ENCODE measurements at regions of chr5 and their contacts with region 1.

Region 1: GRCh38 chr5:82635561-82636288 is 357.6 kb upstream of the RPS23 start:
- DNase-seq: peak; percentile 98
- ATAC-seq: peak; percentile 99
- H3K4me3 ChIP-seq: no peak overlapping the region; a peak in 1 of 6 replicates
- H3K27ac ChIP-seq: peak overlapping the region; percentile 56
- H3K4me1 ChIP-seq: peaks cover 31% of the 10 kb centered on the region
- H3K27me3 ChIP-seq: no peaks in the 10 kb centered on the region
- CTCF ChIP-seq: no peak
- EP300 ChIP-seq: peak in 1 of 2 experiments; percentile 97; a peak in 2 of 4 replicates
- POLR2A ChIP-seq: no peak
- RAD21 ChIP-seq: peak; percentile 15; the same call in 1 of the 2 replicates

Region 2: GRCh38 chr5:82356808-82357671 is 278.7 kb before region 1 on chr5:
- CTCF ChIA-PET with region 1: no interaction called
- POLR2A ChIA-PET with region 1: interaction called, 4 read pairs
- in situ Hi-C with region 1: loop called (anchors 25 kb)
- intact Hi-C with region 1: loop called (anchors 1 kb)
- DNase-seq: peak; percentile 93
- ATAC-seq: peak; percentile 93
- H3K4me3 ChIP-seq: peak overlapping the region in 1 of 3 experiments; percentile 57; a peak in 2 of 6 replicates
- H3K27ac ChIP-seq: peak overlapping the region; percentile 60
- H3K4me1 ChIP-seq: peaks cover 64% of the 10 kb centered on the region
- H3K27me3 ChIP-seq: no peaks in the 10 kb centered on the region
- CTCF ChIP-seq: no peak
- EP300 ChIP-seq: peak in 1 of 2 experiments; percentile 80; a peak in 2 of 4 replicates
- POLR2A ChIP-seq: peak in 1 of 2 experiments; percentile 31; a peak in 1 of 4 replicates
- RAD21 ChIP-seq: no peak

Region 3: GRCh38 chr5:82622711-82623514 is 12.8 kb before region 1 on chr5:
- CTCF ChIA-PET with region 1: no interaction called
- POLR2A ChIA-PET with region 1: interaction called, 28 read pairs
- in situ Hi-C with region 1: no loop called
- intact Hi-C with region 1: no loop called
- DNase-seq: peak; percentile 87
- ATAC-seq: peak; percentile 99
- H3K4me3 ChIP-seq: peak overlapping the region in 1 of 3 experiments; percentile 27; a peak in 1 of 6 replicates
- H3K27ac ChIP-seq: peak overlapping the region; percentile 89
- H3K4me1 ChIP-seq: peaks cover 37% of the 10 kb centered on the region
- H3K27me3 ChIP-seq: no peaks in the 10 kb centered on the region
- CTCF ChIP-seq: no peak
- EP300 ChIP-seq: peak in 1 of 2 experiments; percentile 66; a peak in 2 of 4 replicates
- POLR2A ChIP-seq: 0 out of 4 replicates have a peak, but pooled peaks of 1 of the 2 experiments have one; percentile 35
- RAD21 ChIP-seq: no peak

Region 4: DNA sequence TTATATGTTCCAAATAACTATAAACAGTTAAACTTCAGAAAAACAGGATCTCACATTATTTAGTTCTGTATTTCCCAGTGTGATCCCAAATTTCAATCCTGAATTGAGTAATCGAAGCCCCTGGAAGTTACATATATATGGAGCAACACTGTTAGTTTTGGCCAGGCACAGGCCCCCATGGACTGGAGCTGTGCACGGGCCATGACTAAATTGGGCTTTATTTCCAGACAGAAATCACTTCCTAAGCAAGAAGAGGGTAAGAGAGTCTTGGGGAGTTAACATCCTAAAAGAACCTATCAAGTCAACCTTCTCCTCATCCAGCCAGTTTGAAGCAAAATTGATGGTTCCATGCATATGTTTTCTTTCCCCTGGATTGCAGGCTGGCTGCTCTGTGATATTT is 48.4 kb after region 1 on chr5:
- CTCF ChIA-PET with region 1: no interaction called
- POLR2A ChIA-PET with region 1: no interaction called
- in situ Hi-C with region 1: no loop called
- intact Hi-C with region 1: no loop called
- DNase-seq: no peak
- ATAC-seq: no peak
- H3K4me3 ChIP-seq: no peak overlapping the region
- H3K27ac ChIP-seq: no peak overlapping the region
- H3K4me1 ChIP-seq: no peaks in the 10 kb centered on the region
- H3K27me3 ChIP-seq: no peaks in the 10 kb centered on the region
- CTCF ChIP-seq: no peak
- EP300 ChIP-seq: no peak
- POLR2A ChIP-seq: no peak
- RAD21 ChIP-seq: no peak

Region 5: DNA sequence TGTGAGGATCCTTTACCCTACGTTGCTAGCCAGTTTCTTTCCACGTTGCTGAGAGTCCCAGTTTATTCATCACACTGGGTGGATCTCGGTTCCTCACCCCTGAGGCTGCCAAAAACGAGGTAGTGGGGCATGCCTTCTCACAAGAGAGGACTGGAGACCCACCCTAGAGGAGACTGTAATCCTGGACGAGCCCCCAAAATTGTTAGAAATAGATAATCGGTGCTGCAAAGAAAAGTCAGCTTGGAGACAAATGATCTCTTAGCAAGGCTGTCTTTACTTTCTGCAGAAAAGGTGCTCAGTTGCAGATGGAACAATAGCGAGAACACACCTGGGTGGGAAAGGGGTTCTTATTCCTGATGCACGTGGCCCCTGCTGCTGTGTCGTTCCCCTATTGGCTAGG is 339.7 kb after region 1 on chr5:
- CTCF ChIA-PET with region 1: no interaction called
- POLR2A ChIA-PET with region 1: no interaction called
- in situ Hi-C with region 1: no loop called
- intact Hi-C with region 1: loop called (anchors 10 kb)
- DNase-seq: no peak
- ATAC-seq: no peak
- H3K4me3 ChIP-seq: no peak overlapping the region
- H3K27ac ChIP-seq: no peak overlapping the region
- H3K4me1 ChIP-seq: peaks cover 57% of the 10 kb centered on the region
- H3K27me3 ChIP-seq: no peaks in the 10 kb centered on the region
- CTCF ChIP-seq: no peak
- EP300 ChIP-seq: no peak
- POLR2A ChIP-seq: no peak
- RAD21 ChIP-seq: no peak

Region 6: GRCh38 chr5:83473346-83474163 is 837.8 kb after region 1 on chr5:
- CTCF ChIA-PET with region 1: no interaction called
- POLR2A ChIA-PET with region 1: no interaction called
- in situ Hi-C with region 1: no loop called
- intact Hi-C with region 1: loop called (anchors 2 kb)
- DNase-seq: no peak
- ATAC-seq: peak; percentile 67
- H3K4me3 ChIP-seq: peak overlapping the region; percentile 36 to 68 (median 46); a peak in 5 of 6 replicates
- H3K27ac ChIP-seq: no peak overlapping the region
- H3K4me1 ChIP-seq: peaks cover 71% of the 10 kb centered on the region
- H3K27me3 ChIP-seq: peaks cover 3 to 43% of the 10 kb centered on the region in 2 experiments; a peak in 4 of 5 replicates
- CTCF ChIP-seq: peak; percentile 80
- EP300 ChIP-seq: no peak
- POLR2A ChIP-seq: no peak
- RAD21 ChIP-seq: peak; percentile 57; the same call in 1 of the 2 replicates